Activated CD4-positive, alpha-beta memory T cell treated with anti-CD3 and anti-CD28 coated beads for 36 hours (primary cell): ENCODE measurements at regions of chr1 and their contacts with region 1.

Region 1: GRCh38 chr1:235783148-235783776 is 83.4 kb downstream of the LYST start:
- DNase-seq: no peak
- H3K4me3 Mint-ChIP-seq: no peak overlapping the region
- H3K27ac Mint-ChIP-seq: no peak overlapping the region
- H3K4me1 Mint-ChIP-seq: no peaks in the 10 kb centered on the region
- H3K27me3 Mint-ChIP-seq: no peaks in the 10 kb centered on the region

Region 2: DNA sequence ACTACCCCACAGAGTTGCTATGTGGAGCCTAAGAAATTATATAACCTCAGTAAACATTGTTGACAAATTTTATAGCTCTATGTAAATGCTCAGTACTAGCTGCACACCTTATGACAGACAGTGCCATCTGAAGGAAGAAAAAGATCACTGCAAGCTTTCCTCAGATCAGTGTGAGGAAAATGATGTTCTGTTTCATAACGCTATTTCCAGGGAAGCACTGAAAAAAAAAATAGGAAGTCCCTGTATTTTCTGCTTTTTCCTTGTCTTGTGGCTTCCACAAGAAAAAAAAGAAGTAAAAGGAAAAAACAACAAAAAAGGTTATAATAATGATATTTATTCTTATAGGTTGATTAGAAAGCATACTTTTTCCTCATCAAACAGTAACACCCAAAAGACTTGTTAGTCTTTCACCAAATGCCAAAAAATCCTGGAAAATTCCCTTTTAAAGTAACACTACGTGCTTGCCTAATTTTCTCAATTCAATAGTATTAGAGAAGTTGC is 60.2 kb after region 1 on chr1:
- CTCF ChIA-PET with region 1: interaction called, 12 read pairs
- POLR2A ChIA-PET with region 1: no interaction called
- intact Hi-C with region 1: no loop called
- DNase-seq: no peak
- H3K4me3 Mint-ChIP-seq: no peak overlapping the region
- H3K27ac Mint-ChIP-seq: no peak overlapping the region
- H3K4me1 Mint-ChIP-seq: peaks cover 48% of the 10 kb centered on the region
- H3K27me3 Mint-ChIP-seq: no peaks in the 10 kb centered on the region

Region 3: DNA sequence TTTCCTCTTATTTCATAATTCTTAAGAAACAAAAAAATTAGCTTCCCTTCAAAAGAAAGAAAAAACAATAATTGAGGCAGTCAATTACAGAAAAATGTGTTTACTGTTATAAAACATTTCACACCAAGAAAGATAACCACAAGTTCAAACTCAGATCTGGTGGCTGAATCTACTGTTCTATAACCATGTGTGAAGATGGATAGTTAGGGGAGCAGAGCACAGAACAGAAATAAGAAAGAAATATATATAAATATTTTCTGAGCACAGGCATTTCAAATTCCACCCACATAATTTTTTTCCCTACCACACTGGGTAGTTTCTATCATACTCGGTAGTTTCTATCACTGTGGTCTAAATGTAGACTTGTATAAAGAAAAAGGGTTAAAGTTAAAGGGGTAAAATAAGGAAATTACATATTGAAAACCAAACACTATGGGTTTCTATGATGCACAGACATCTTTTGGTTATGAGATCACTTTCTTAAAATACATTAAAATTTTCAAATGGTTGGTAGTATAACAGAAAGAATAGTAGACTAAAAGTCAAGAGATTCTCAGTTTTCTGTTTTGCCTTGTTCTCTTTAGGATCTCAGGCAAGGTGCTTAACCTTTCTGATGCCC is 72.7 kb after region 1 on chr1:
- CTCF ChIA-PET with region 1: no interaction called
- POLR2A ChIA-PET with region 1: no interaction called
- intact Hi-C with region 1: no loop called
- DNase-seq: no peak
- H3K4me3 Mint-ChIP-seq: no peak overlapping the region
- H3K27ac Mint-ChIP-seq: no peak overlapping the region
- H3K4me1 Mint-ChIP-seq: peaks cover 47% of the 10 kb centered on the region
- H3K27me3 Mint-ChIP-seq: no peaks in the 10 kb centered on the region